GM12878 (cell line): ENCODE measurements at regions of chr11 and their contacts with region 1.

Region 1: GRCh38 chr11:46238967-46239800 is 38.3 kb upstream of the CREB3L1 start:
- DNase-seq: no peak
- ATAC-seq: peak; percentile 93
- H3K4me3 ChIP-seq: peak overlapping the region; percentile 39; the same call in 1 of the 2 replicates
- H3K27ac ChIP-seq: no peak overlapping the region
- H3K4me1 ChIP-seq: peaks cover 12% of the 10 kb centered on the region
- H3K27me3 ChIP-seq: peaks cover 0 to 5% of the 10 kb centered on the region in 2 experiments; a peak in 1 of 4 replicates
- CTCF ChIP-seq: peak; percentile 95 to 96 (median 95)
- EP300 ChIP-seq: no peak
- POLR2A ChIP-seq: no peak
- RAD21 ChIP-seq: peak; percentile 86

Region 2: DNA sequence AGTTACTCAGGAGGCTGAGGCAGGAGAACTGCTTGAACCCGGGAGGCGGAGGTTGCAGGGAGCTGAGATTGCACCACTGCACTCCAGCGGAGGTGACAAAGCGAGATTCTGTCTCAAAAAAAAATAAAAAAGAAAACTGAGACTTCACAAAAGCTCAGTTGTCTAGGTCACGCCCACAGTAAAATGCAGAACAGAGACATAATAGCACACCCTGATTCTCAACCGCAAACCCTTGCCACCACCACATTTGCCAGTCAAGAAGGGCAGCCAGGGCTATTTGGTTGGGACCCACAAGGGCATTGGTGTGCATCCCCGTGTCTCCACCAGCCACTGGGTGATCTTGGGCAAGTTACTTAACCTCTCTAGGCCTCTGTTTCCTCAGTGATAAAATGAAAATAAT is 63.7 kb after region 1 on chr11:
- CTCF ChIA-PET with region 1: interaction called, 626 read pairs
- POLR2A ChIA-PET with region 1: interaction called, 5 read pairs
- RAD21 ChIA-PET with region 1: interaction called, 316 read pairs
- SMC1A ChIA-PET with region 1: interaction called, 120 read pairs
- in situ Hi-C with region 1: no loop called
- intact Hi-C with region 1: loop called (anchors 1 kb)
- DNase-seq: peak; percentile 87
- ATAC-seq: peak; percentile 96
- H3K4me3 ChIP-seq: no peak overlapping the region
- H3K27ac ChIP-seq: no peak overlapping the region
- H3K4me1 ChIP-seq: peaks cover 23% of the 10 kb centered on the region
- H3K27me3 ChIP-seq: no peaks in the 10 kb centered on the region; a peak in 1 of 4 replicates
- CTCF ChIP-seq: no peak
- EP300 ChIP-seq: peak in 1 of 2 experiments; percentile 69; a peak in 1 of 4 replicates
- POLR2A ChIP-seq: no peak
- RAD21 ChIP-seq: no peak

Region 3: DNA sequence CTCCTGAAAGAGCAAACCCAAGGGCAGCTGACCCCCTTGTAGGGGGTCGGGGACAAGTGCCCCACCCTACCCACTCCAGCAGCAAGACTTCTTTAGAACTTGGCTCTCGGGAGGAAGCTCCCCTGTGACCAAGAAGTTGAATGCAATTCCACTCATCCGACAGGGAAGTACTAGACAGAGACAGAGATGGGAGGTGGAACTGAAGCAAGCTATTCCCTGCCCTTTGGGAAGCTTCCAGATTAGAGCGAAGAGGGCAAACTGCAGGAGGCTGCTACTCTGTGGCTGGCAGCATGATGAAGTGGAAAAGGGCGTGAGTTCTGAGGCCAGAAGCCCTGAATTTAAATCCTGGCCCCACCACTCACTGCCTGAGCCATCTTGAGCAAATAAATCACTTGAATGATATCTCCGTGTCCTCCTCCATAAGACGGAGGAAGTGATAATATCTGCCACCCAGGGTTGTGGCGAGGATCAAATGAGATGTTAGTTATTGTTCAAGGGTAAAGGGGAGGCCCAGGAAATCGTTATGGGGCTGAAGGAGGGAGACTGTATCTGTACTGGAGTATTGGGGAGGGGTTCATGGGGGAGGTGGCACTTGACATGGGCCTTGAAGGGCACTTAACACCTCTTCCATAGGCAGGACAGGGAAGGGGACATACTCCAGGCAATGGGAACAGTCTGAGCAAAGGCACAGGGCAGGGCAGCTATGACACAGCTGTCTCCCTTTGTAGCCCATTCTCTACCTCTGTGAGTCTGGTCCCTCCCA is 91.9 kb after region 1 on chr11:
- CTCF ChIA-PET with region 1: interaction called, 13 read pairs
- POLR2A ChIA-PET with region 1: no interaction called
- RAD21 ChIA-PET with region 1: no interaction called
- SMC1A ChIA-PET with region 1: interaction called, 3 read pairs
- in situ Hi-C with region 1: no loop called
- intact Hi-C with region 1: no loop called
- DNase-seq: no peak
- ATAC-seq: 0 out of 3 replicates have a peak, but pooled peaks have one; percentile 23
- H3K4me3 ChIP-seq: no peak overlapping the region
- H3K27ac ChIP-seq: no peak overlapping the region
- H3K4me1 ChIP-seq: no peaks in the 10 kb centered on the region; the same call in 1 of the 2 replicates
- H3K27me3 ChIP-seq: peaks cover 17 to 30% of the 10 kb centered on the region in 2 experiments
- CTCF ChIP-seq: no peak
- EP300 ChIP-seq: no peak
- POLR2A ChIP-seq: no peak
- RAD21 ChIP-seq: no peak

Region 4: DNA sequence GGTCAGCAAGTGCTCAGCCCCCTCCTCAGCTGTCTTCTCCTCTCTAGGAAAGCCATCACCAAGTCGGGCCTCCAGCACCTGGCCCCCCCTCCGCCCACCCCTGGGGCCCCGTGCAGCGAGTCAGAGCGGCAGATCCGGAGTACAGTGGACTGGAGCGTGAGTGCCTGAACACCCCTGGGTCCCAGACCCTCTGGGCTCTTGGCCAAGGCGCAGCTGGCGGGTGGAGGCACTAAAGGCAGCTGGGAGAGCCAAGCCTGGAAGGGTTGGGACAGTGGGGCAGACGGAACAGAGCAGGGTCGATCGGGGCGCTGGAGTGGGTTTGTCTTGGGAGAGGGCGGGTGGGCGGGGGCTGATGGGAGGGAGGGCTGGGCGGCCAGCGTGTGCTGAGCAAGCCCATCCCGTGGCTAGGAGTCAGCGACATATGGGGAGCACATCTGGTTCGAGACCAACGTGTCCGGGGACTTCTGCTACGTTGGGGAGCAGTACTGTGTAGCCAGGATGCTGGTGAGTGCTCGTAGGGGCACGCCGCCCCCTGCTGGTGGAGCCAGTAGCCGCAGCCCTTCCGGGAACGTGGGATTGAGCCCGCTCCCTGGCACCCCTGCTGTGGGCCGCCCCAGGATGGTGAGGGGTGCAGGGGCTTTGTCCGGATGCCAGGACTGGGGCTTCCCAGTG is 128.2 kb after region 1 on chr11:
- CTCF ChIA-PET with region 1: interaction called, 9 read pairs
- POLR2A ChIA-PET with region 1: no interaction called
- RAD21 ChIA-PET with region 1: interaction called, 3 read pairs
- SMC1A ChIA-PET with region 1: no interaction called
- in situ Hi-C with region 1: no loop called
- intact Hi-C with region 1: loop called (anchors 5 kb)
- DNase-seq: no peak
- ATAC-seq: peak; percentile 92
- H3K4me3 ChIP-seq: no peak overlapping the region
- H3K27ac ChIP-seq: no peak overlapping the region
- H3K4me1 ChIP-seq: peaks cover 7% of the 10 kb centered on the region
- H3K27me3 ChIP-seq: no peaks in the 10 kb centered on the region
- CTCF ChIP-seq: peak; percentile 77 to 94 (median 80)
- EP300 ChIP-seq: no peak
- POLR2A ChIP-seq: no peak
- RAD21 ChIP-seq: peak; percentile 62